ENCODE measurements at regions of chr9 and their contacts with region 1.

Region 1: GRCh38 chr9:447230-448025 is 232.8 kb downstream of the DOCK8 start:
- DNase-seq: peak; percentile 23 to 88 (median 54)
- ATAC-seq: peak; percentile 98
- H3K4me3 ChIP-seq: no peak overlapping the region
- H3K4me3 Mint-ChIP-seq: no peak overlapping the region
- H3K27ac ChIP-seq: peak overlapping the region in 1 of 2 donors; percentile 52
- H3K27ac Mint-ChIP-seq: peak overlapping the region; percentile 86
- H3K4me1 ChIP-seq: peaks cover 26% of the 10 kb centered on the region
- H3K4me1 Mint-ChIP-seq: peaks cover 30% of the 10 kb centered on the region
- H3K27me3 ChIP-seq: no peaks in the 10 kb centered on the region
- H3K27me3 Mint-ChIP-seq: no peaks in the 10 kb centered on the region
- CTCF ChIP-seq: no peak

Region 2: GRCh38 chr9:272251-273213 is 174.9 kb before region 1 on chr9:
- CTCF ChIA-PET with region 1: no interaction called
- POLR2A ChIA-PET with region 1: no interaction called
- intact Hi-C with region 1: no loop called
- DNase-seq: peak; percentile 56 to 92 (median 69)
- ATAC-seq: peak; percentile 83
- H3K4me3 ChIP-seq: peak overlapping the region; percentile 76
- H3K4me3 Mint-ChIP-seq: peak overlapping the region; percentile 92
- H3K27ac ChIP-seq: peak overlapping the region; percentile 94 to 95
- H3K27ac Mint-ChIP-seq: no peak overlapping the region
- H3K4me1 ChIP-seq: peaks cover 55% of the 10 kb centered on the region
- H3K4me1 Mint-ChIP-seq: peaks cover 57% of the 10 kb centered on the region
- H3K27me3 ChIP-seq: no peaks in the 10 kb centered on the region
- H3K27me3 Mint-ChIP-seq: no peaks in the 10 kb centered on the region
- CTCF ChIP-seq: no peak

Region 3: DNA sequence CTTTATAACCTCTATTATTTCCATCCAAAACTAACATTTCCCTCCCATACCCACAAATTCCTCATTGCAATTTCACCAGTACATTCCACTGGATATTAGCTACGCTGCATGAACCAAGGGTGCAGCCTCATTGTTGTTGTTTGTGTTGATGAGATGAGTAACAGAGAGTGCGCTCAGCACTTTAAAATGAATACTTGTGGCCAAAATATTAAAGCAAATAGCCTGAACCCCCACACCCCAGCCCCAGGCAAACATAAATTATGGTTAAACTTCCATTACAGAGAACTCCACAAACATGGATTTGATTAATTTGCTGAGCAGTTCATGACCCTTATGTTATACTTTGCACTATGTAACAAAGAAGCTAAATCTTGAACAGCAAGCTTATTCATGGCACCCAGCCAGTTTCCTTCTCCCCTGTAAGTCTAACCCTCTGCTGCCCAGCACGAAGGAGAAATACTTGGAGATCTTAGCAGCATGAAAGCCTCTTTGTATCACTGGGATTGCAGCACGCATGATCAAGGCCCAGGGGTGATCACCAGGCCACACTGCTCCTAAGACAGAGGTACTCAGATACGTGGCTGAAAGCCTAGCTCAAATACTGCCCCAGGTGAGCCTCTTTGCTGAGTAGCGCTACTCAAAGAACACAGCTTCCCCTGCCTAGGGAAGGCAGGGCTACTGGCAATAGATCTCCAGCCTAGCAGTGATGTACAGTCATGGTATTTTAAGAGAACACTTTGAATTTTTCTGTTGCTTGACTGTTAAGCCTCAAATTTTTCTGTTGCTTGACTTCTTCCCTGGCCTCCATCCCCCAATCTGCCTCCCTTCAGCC is 27.6 kb before region 1 on chr9:
- CTCF ChIA-PET with region 1: no interaction called
- POLR2A ChIA-PET with region 1: no interaction called
- intact Hi-C with region 1: no loop called
- DNase-seq: no peak
- ATAC-seq: no peak
- H3K4me3 ChIP-seq: no peak overlapping the region
- H3K4me3 Mint-ChIP-seq: no peak overlapping the region
- H3K27ac ChIP-seq: no peak overlapping the region
- H3K27ac Mint-ChIP-seq: no peak overlapping the region
- H3K4me1 ChIP-seq: no peaks in the 10 kb centered on the region
- H3K4me1 Mint-ChIP-seq: no peaks in the 10 kb centered on the region
- H3K27me3 ChIP-seq: no peaks in the 10 kb centered on the region
- H3K27me3 Mint-ChIP-seq: no peaks in the 10 kb centered on the region
- CTCF ChIP-seq: no peak

Region 4: DNA sequence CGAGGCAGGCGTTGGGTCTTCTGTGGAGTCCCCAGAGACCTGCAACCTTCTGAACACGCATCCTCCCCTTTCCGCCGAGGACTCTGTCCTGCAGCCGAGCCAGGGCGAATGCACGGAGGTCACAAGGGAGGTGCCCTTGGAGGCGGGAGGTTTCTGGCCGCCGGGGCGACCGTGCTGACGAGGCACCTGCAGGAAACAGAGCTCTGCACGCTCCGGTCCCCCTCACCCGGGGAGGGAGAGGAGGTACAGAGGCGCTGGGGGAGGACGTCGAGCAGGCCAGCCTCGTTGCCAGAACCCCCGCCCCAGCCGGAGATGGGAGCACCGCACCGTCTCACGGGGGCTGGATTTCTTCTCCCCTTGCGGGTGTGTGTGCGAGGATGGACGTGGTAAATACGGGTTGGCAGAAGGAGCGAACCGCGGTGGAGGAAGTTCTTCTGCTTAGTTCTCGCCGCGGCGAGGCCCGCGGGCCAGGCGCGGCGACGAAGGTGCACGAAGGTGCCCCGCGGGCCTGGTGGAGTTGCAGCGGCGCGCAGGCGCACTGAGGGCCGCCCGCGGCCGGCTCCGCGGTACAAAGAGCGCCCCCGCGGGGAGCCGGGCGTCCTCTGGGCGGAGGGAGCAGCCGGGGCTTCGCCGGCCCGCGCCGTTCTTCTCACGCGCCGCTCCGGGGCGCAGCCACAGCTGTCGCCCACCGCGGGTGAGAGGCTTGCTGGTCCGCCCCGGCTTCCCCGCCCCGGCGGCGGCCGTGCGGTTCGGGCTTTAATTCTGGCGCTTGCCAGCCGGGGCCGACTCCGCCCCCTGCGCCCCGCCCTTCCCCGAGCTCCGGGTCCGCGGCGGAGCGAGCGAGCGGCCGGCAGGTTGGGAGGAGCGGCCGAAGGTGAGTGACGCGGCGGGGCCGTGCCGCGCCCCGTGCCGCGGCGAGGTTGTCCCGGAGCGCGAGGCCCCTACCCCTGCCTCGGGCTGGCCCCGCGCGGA is 56.7 kb after region 1 on chr9:
- CTCF ChIA-PET with region 1: no interaction called
- POLR2A ChIA-PET with region 1: no interaction called
- intact Hi-C with region 1: loop called in 1 of 2 experiments (anchors 2 kb)
- DNase-seq: peak; percentile 48 to 93 (median 73)
- ATAC-seq: peak; percentile 81
- H3K4me3 ChIP-seq: peak within 1 kb of the TSS; percentile 69
- H3K4me3 Mint-ChIP-seq: peak within 1 kb of the TSS; percentile 86
- H3K27ac ChIP-seq: no peak within 1 kb of the TSS
- H3K27ac Mint-ChIP-seq: peak within 1 kb of the TSS; percentile 51
- H3K4me1 ChIP-seq: peaks cover 22% of the 10 kb centered on the region
- H3K4me1 Mint-ChIP-seq: peaks cover 14% of the 10 kb centered on the region
- H3K27me3 ChIP-seq: peaks cover 0 to 2% of the 10 kb centered on the region in 2 experiments
- H3K27me3 Mint-ChIP-seq: peaks cover 37% of the 10 kb centered on the region
- CTCF ChIP-seq: peak; percentile 41

Region 5: DNA sequence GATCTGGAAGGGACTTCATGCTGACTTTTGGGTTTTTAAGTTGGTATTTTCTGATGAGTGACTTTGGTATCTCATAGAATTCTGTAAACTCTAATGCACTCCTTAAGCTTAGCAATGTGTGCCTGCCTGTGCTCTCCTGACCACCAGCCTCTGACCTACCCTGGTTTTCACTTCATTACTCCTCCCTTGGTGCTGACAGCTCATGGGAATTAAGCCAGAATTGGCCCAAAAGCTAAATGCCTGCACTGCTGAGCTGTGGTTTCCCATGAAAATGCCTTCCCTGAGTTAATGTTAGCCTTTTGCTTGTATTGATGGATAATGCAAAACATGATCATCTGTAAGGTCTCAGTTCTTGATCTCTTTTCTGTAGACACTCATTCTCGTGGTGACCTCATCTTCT is 75.2 kb after region 1 on chr9:
- CTCF ChIA-PET with region 1: no interaction called
- POLR2A ChIA-PET with region 1: no interaction called
- intact Hi-C with region 1: no loop called
- DNase-seq: no peak
- ATAC-seq: no peak
- H3K4me3 ChIP-seq: no peak overlapping the region
- H3K4me3 Mint-ChIP-seq: no peak overlapping the region
- H3K27ac ChIP-seq: no peak overlapping the region
- H3K27ac Mint-ChIP-seq: no peak overlapping the region
- H3K4me1 ChIP-seq: peaks cover 14% of the 10 kb centered on the region
- H3K4me1 Mint-ChIP-seq: peaks cover 15% of the 10 kb centered on the region
- H3K27me3 ChIP-seq: no peaks in the 10 kb centered on the region
- H3K27me3 Mint-ChIP-seq: no peaks in the 10 kb centered on the region
- CTCF ChIP-seq: no peak

Region 6: GRCh38 chr9:546797-547223 is 99.4 kb after region 1 on chr9:
- CTCF ChIA-PET with region 1: interaction called, 10 read pairs
- POLR2A ChIA-PET with region 1: no interaction called
- intact Hi-C with region 1: no loop called
- DNase-seq: peak in 4 of 14 experiments; percentile 10 to 41 (median 17)
- ATAC-seq: no peak
- H3K4me3 ChIP-seq: no peak overlapping the region
- H3K4me3 Mint-ChIP-seq: no peak overlapping the region
- H3K27ac ChIP-seq: no peak overlapping the region
- H3K27ac Mint-ChIP-seq: no peak overlapping the region
- H3K4me1 ChIP-seq: no peaks in the 10 kb centered on the region
- H3K4me1 Mint-ChIP-seq: peaks cover 12% of the 10 kb centered on the region
- H3K27me3 ChIP-seq: peaks cover 0 to 5% of the 10 kb centered on the region in 2 experiments
- H3K27me3 Mint-ChIP-seq: peaks cover 20% of the 10 kb centered on the region
- CTCF ChIP-seq: no peak

Region 7: GRCh38 chr9:589723-590122 is 142.3 kb after region 1 on chr9:
- CTCF ChIA-PET with region 1: no interaction called
- POLR2A ChIA-PET with region 1: no interaction called
- intact Hi-C with region 1: no loop called
- DNase-seq: no peak
- ATAC-seq: no peak
- H3K4me3 ChIP-seq: no peak overlapping the region
- H3K4me3 Mint-ChIP-seq: no peak overlapping the region
- H3K27ac ChIP-seq: no peak overlapping the region
- H3K27ac Mint-ChIP-seq: no peak overlapping the region
- H3K4me1 ChIP-seq: no peaks in the 10 kb centered on the region
- H3K4me1 Mint-ChIP-seq: no peaks in the 10 kb centered on the region
- H3K27me3 ChIP-seq: no peaks in the 10 kb centered on the region
- H3K27me3 Mint-ChIP-seq: no peaks in the 10 kb centered on the region
- CTCF ChIP-seq: no peak